ENCODE measurements at regions of chr4 and their contacts with region 1.

Region 1: GRCh38 chr4:103915224-103915869 is 195.6 kb upstream of the TACR3 start:
- DNase-seq: no peak
- H3K4me3 ChIP-seq: no peak overlapping the region
- H3K27ac ChIP-seq: no peak overlapping the region
- H3K4me1 ChIP-seq: no peaks in the 10 kb centered on the region
- H3K27me3 ChIP-seq: no peaks in the 10 kb centered on the region
- CTCF ChIP-seq: peak; percentile 75

Region 2: GRCh38 chr4:103478729-103479128 is 436.6 kb before region 1 on chr4:
- CTCF ChIA-PET with region 1: no interaction called
- POLR2A ChIA-PET with region 1: no interaction called
- intact Hi-C with region 1: loop called (anchors 10 kb)
- DNase-seq: no peak
- H3K4me3 ChIP-seq: no peak overlapping the region
- H3K27ac ChIP-seq: no peak overlapping the region
- H3K4me1 ChIP-seq: no peaks in the 10 kb centered on the region
- H3K27me3 ChIP-seq: no peaks in the 10 kb centered on the region
- CTCF ChIP-seq: peak; percentile 35; the same call in 1 of the 2 replicates

Region 3: DNA sequence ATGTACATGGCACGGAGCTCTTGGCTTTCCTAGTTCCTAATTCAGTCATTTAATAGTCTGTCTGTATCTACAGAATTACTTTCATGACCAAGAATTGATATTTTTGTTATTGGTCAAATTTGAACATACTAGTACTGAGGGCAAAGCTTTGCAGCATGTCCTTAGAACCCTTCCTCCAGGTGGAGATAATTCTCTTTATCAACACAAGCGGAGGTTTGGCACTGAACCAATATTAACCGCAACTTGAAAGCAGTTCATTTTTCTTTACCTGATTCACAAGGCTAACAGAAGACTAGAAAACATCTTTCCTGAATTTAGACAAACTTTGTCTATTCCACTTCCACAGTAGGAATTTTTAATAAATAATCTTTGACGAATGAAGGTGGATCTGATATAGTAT is 269.4 kb before region 1 on chr4:
- CTCF ChIA-PET with region 1: no interaction called
- POLR2A ChIA-PET with region 1: no interaction called
- intact Hi-C with region 1: loop called (anchors 10 kb)
- DNase-seq: no peak
- H3K4me3 ChIP-seq: no peak overlapping the region
- H3K27ac ChIP-seq: no peak overlapping the region
- H3K4me1 ChIP-seq: no peaks in the 10 kb centered on the region
- H3K27me3 ChIP-seq: no peaks in the 10 kb centered on the region
- CTCF ChIP-seq: no peak

Region 4: DNA sequence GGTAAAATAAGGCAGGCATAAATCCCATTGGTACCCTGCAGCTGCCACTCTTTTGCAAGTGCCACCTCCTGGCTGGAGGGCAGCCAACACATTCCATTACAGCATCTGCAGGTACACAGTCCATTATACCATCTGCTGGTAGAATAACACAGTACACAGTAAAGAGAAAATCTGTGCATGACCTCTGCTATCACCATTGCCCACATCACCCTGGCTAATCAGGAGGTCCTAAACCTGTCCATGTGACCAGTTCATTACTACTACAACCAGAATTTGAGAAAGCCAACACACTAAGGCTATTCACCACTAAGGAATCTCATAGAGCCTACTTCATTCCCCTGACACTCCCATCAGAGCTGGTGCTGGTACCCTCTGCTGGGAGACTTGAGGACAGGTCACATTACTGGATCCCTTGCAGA is 19.4 kb before region 1 on chr4:
- CTCF ChIA-PET with region 1: no interaction called
- POLR2A ChIA-PET with region 1: no interaction called
- intact Hi-C with region 1: no loop called
- DNase-seq: no peak
- H3K4me3 ChIP-seq: no peak overlapping the region
- H3K27ac ChIP-seq: no peak overlapping the region
- H3K4me1 ChIP-seq: no peaks in the 10 kb centered on the region
- H3K27me3 ChIP-seq: no peaks in the 10 kb centered on the region
- CTCF ChIP-seq: no peak

Region 5: GRCh38 chr4:104424989-104425388 is 509.6 kb after region 1 on chr4:
- CTCF ChIA-PET with region 1: no interaction called
- POLR2A ChIA-PET with region 1: no interaction called
- intact Hi-C with region 1: no loop called
- DNase-seq: no peak
- H3K4me3 ChIP-seq: no peak overlapping the region
- H3K27ac ChIP-seq: no peak overlapping the region
- H3K4me1 ChIP-seq: no peaks in the 10 kb centered on the region
- H3K27me3 ChIP-seq: no peaks in the 10 kb centered on the region
- CTCF ChIP-seq: no peak